ENCODE measurements at regions of chr9 and their contacts with region 1.

Region 1: DNA sequence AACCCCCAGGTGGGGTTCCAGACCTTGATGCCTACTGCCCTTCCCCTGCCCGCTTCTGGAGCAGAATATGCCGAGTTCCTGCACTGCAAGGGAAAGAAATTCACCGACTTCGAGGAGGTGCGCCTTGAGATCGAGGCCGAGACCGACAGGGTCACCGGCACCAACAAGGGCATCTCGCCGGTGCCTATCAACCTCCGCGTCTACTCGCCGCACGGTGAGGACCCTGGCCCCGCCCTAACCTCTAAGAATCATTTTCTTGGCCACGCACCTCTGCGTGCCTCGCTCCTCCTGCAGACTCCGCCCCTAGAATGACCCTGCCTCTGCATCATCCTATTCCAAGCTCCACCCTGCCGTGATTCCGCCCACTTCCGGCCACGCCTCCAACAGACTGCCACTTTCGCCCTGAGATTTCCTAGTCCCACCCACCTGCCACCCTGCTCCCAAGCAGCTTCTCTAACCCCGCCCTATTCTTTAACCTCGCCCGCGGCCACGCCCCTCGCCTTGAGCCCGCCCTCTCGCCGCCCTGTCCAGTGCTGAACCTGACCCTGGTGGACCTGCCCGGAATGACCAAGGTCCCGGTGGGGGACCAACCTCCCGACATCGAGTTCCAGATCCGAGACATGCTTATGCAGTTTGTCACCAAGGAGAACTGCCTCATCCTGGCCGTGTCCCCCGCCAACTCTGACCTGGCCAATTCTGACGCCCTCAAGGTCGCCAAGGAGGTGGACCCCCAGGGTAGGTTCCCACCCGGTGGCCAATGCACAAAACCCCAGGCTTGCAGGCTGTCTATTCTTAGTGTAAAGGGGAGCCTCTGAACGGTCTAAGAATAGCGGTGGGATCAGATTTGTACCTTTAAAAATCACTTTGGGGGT is 15.6 kb downstream of the DNM1 start:
- DNase-seq: peak; percentile 70 to 93 (median 89)
- ATAC-seq: peak; percentile 98
- H3K4me3 ChIP-seq: peak overlapping the region; percentile 62
- H3K4me3 Mint-ChIP-seq: peak overlapping the region; percentile 80 to 93 (median 83)
- H3K27ac ChIP-seq: peak overlapping the region; percentile 47
- H3K27ac Mint-ChIP-seq: peak overlapping the region; percentile 18 to 93 (median 65)
- H3K4me1 ChIP-seq: peaks cover 5 to 7% of the 10 kb centered on the region in 2 donors
- H3K4me1 Mint-ChIP-seq: peaks cover 9 to 13% (median 12%) of the 10 kb centered on the region in 7 donors
- H3K27me3 ChIP-seq: no peaks in the 10 kb centered on the region
- H3K27me3 Mint-ChIP-seq: peaks cover 0 to 8% (median 0%) of the 10 kb centered on the region in 5 donors

Region 2: DNA sequence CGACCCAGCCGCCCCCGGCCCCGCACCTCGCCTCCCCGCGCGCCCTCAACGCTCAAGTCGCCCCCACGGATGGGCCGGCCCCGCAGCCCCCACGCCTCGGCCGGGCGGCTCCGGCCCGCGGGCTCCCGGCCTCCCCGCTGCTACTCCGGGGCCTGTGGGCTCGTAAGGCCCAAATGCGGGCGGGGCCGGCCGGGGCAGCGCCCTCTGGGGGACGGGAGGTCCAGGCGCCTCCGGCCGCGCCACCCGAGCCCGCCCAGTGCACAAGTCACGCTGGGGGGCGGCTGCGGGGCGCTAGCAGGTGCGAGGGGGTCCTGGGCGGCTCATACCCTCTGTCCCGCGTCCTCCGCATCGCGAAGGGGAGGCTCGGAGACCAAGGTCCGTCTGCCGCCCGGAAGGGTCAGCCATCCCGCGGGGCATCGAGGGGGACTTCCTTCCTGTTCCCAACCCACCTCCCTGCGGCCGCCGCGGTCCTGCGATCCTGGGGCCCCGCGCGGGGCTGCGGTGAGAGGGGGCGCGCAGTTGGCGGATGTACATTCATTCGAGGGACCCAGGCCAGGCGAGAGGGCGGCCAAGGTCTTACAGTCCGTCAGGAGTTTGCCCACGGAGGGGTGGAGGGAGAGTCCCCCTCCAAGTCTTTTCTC is 27.2 kb before region 1 on chr9 and contains the start of gene CIZ1:
- CTCF ChIA-PET with region 1: interaction called, 3 read pairs
- POLR2A ChIA-PET with region 1: no interaction called
- intact Hi-C with region 1: loop called in 1 of 2 experiments (anchors 1 kb)
- DNase-seq: peak; percentile 51 to 86 (median 69)
- ATAC-seq: peak; percentile 95
- H3K4me3 ChIP-seq: peak within 1 kb of the TSS; percentile 76
- H3K4me3 Mint-ChIP-seq: peak within 1 kb of the TSS; percentile 92 to 99 (median 96)
- H3K27ac ChIP-seq: peak within 1 kb of the TSS; percentile 89
- H3K27ac Mint-ChIP-seq: peak within 1 kb of the TSS; percentile 84 to 93 (median 90)
- H3K4me1 ChIP-seq: peaks cover 12 to 16% of the 10 kb centered on the region in 2 donors
- H3K4me1 Mint-ChIP-seq: peaks cover 13 to 39% (median 31%) of the 10 kb centered on the region in 7 donors
- H3K27me3 ChIP-seq: no peaks in the 10 kb centered on the region
- H3K27me3 Mint-ChIP-seq: peaks cover 0 to 13% (median 0%) of the 10 kb centered on the region in 5 donors
- total RNA-seq, gene CIZ1: 110 to 163 (median 142) TPM

Region 3: GRCh38 chr9:128203024-128203706 is 15.6 kb before region 1 on chr9 and contains the start of gene DNM1:
- CTCF ChIA-PET with region 1: interaction called, 5 read pairs
- POLR2A ChIA-PET with region 1: no interaction called
- intact Hi-C with region 1: loop called (anchors 1 kb)
- DNase-seq: peak; percentile 50 to 89 (median 80)
- ATAC-seq: peak; percentile 99
- H3K4me3 ChIP-seq: peak within 1 kb of the TSS; percentile 51
- H3K4me3 Mint-ChIP-seq: peak within 1 kb of the TSS; percentile 63 to 83 (median 76)
- H3K27ac ChIP-seq: no peak within 1 kb of the TSS
- H3K27ac Mint-ChIP-seq: peak within 1 kb of the TSS in 7 of 9 donors; percentile 3 to 84 (median 73)
- H3K4me1 ChIP-seq: peaks cover 4 to 8% of the 10 kb centered on the region in 2 donors
- H3K4me1 Mint-ChIP-seq: peaks cover 6 to 14% (median 8%) of the 10 kb centered on the region in 7 donors
- H3K27me3 ChIP-seq: peaks cover 0 to 5% of the 10 kb centered on the region in 2 donors
- H3K27me3 Mint-ChIP-seq: peaks cover 0 to 33% (median 6%) of the 10 kb centered on the region in 5 donors
- total RNA-seq, gene DNM1: 0.24 to 2.0 (median 0.94) TPM

Region 4: DNA sequence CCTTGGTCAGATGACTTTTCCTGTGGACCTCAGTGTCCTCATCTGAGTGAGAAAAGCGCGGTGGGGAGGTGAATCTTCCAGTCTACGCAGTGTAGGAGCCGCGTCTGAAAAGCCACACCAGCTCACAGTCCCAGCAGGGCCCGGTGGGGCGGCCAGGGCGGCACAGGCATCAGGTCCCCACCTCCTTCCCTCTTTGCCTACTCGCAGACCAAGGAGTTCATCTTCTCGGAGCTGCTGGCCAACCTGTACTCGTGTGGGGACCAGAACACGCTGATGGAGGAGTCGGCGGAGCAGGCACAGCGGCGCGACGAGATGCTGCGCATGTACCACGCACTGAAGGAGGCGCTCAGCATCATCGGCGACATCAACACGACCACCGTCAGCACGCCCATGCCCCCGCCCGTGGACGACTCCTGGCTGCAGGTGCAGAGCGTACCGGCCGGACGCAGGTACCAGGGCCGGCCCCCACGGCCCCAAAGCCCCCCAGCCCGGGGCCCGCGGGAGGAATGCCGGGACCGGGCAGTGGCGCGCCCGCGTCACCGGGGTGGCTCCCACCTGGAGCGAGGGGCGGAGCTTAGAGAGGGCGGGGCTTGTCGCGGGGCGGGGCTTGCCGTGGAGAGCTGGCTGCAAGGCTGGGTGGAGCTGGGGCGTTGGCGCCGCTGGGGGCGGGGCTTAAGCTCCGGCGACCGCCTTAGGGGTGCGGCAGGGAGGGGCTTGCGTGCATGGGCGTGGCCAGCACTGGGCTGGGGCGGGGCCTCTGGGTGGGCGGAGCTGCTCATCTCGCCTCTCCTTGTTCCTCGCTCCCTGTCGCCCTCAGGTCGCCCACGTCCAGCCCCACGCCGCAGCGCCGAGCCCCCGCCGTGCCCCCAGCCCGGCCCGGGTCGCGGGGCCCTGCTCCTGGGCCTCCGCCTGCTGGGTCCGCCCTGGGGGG is 31.4 kb after region 1 on chr9:
- CTCF ChIA-PET with region 1: no interaction called
- POLR2A ChIA-PET with region 1: no interaction called
- intact Hi-C with region 1: loop called (anchors 1 kb)
- DNase-seq: peak; percentile 96 to 100 (median 98)
- ATAC-seq: peak; percentile 98
- H3K4me3 ChIP-seq: peak overlapping the region; percentile 83
- H3K4me3 Mint-ChIP-seq: peak overlapping the region; percentile 79 to 93 (median 88)
- H3K27ac ChIP-seq: peak overlapping the region; percentile 72
- H3K27ac Mint-ChIP-seq: peak overlapping the region; percentile 60 to 97 (median 95)
- H3K4me1 ChIP-seq: peaks cover 7 to 9% of the 10 kb centered on the region in 2 donors
- H3K4me1 Mint-ChIP-seq: peaks cover 7 to 28% (median 17%) of the 10 kb centered on the region in 7 donors
- H3K27me3 ChIP-seq: no peaks in the 10 kb centered on the region
- H3K27me3 Mint-ChIP-seq: peaks cover 0 to 39% (median 6%) of the 10 kb centered on the region in 5 donors

Measured in naive thymus-derived CD4-positive, alpha-beta T cell (primary cell).